Activated T-helper 1 cell treated with anti-CD3 and anti-CD28 coated beads, Interleukin-12 subunit alpha, Interleukin-12 subunit beta, Interleukin-2, Interleukin-4 antibody, amounts not matched to agents 30 ng/mL and 10 ng/mL and 1 ng/mL, durations not matched to agents 14 hours and 24 hours and 36 hours (primary cell): ENCODE measurements at regions of chr12 and their contacts with region 1.

Region 1: GRCh38 chr12:19683178-19683927 is 244.1 kb downstream of the AEBP2 start:
- DNase-seq: no peak
- H3K4me3 Mint-ChIP-seq: no peak overlapping the region
- H3K27ac Mint-ChIP-seq: no peak overlapping the region
- H3K4me1 Mint-ChIP-seq: peaks cover 28% of the 10 kb centered on the region
- H3K27me3 Mint-ChIP-seq: peaks cover 6% of the 10 kb centered on the region

Region 2: DNA sequence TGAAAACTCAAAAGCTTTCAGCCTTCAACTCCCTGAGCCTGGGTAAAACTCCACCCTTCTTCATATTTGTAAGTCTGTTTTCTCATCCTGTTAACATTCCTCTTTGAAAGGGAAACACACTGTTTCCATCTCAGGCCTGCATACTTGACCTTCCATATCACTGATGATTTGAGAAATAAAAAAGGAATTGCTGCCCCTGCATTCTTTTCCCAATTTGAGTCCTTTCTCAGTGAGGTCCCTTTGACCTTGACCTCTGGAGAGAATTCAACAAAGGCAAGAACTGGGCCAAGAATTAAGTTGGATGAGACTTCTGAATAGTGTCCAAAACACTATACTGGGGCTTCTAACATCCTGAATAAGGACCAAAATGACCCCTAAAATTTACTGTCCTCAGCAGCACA is 136.1 kb before region 1 on chr12:
- intact Hi-C with region 1: loop called (anchors 1 kb)
- DNase-seq: no peak
- H3K4me3 Mint-ChIP-seq: no peak overlapping the region
- H3K27ac Mint-ChIP-seq: no peak overlapping the region
- H3K4me1 Mint-ChIP-seq: peaks cover 4% of the 10 kb centered on the region
- H3K27me3 Mint-ChIP-seq: no peaks in the 10 kb centered on the region

Region 3: DNA sequence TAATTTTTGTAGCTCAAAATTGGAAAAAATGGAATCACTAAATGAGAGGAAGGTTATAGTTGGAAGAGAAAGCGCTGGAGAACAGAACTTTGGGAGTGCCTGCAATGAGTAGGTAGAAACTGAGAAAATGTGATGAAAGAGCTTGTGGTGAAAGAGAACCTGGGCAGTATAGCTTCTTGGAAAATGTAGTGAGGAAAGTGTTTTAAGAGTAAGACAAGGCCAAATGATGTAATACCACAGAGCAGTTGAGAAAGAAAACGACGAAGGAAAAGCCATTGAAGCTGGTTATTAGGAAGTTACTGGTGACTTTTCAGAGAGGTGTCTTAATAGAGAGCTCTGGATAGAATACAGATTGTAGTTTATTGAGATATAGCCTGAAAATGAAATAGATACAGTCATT is 11.3 kb after region 1 on chr12:
- intact Hi-C with region 1: loop called (anchors 2 kb)
- DNase-seq: no peak
- H3K4me3 Mint-ChIP-seq: no peak overlapping the region
- H3K27ac Mint-ChIP-seq: peak overlapping the region; percentile 28
- H3K4me1 Mint-ChIP-seq: peaks cover 18% of the 10 kb centered on the region
- H3K27me3 Mint-ChIP-seq: no peaks in the 10 kb centered on the region

Region 4: DNA sequence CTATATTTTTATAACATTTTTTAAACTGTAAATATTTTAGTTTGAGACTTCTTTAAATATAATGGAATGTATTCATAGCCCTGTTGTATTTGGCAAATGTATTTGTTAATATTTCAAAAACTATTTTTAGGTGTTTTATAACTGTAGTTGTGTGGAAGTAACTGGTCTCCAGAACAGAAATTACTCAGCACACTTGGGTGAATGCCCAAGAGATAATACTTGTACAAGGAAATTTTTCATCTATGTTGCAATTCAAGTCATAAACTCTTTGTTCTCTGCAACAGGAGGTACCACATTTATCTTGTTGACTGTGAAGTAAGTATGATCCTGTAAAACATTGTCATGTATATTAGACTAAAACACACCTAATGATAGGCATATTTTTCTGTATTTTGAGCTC is 1199.9 kb after region 1 on chr12:
- intact Hi-C with region 1: no loop called
- DNase-seq: no peak
- H3K4me3 Mint-ChIP-seq: no peak overlapping the region
- H3K27ac Mint-ChIP-seq: no peak overlapping the region
- H3K4me1 Mint-ChIP-seq: no peaks in the 10 kb centered on the region
- H3K27me3 Mint-ChIP-seq: no peaks in the 10 kb centered on the region